MCF 10A (cell line): ENCODE measurements at regions of chr14 and their contacts with region 1.

Region 1: GRCh38 chr14:99729991-99730868 is 46.1 kb downstream of the CYP46A1 start:
- DNase-seq: peak; percentile 34
- H3K4me3 Mint-ChIP-seq: no peak overlapping the region
- H3K27ac Mint-ChIP-seq: no peak overlapping the region
- H3K4me1 Mint-ChIP-seq: no peaks in the 10 kb centered on the region
- H3K27me3 Mint-ChIP-seq: no peaks in the 10 kb centered on the region
- CTCF ChIP-seq: peak; percentile 90

Region 2: GRCh38 chr14:99192028-99192621 is 538.1 kb before region 1 on chr14:
- CTCF ChIA-PET with region 1: no interaction called
- POLR2A ChIA-PET with region 1: no interaction called
- intact Hi-C with region 1: no loop called
- DNase-seq: peak; percentile 85
- H3K4me3 Mint-ChIP-seq: peak overlapping the region; percentile 72
- H3K27ac Mint-ChIP-seq: peak overlapping the region; percentile 57
- H3K4me1 Mint-ChIP-seq: peaks cover 13% of the 10 kb centered on the region
- H3K27me3 Mint-ChIP-seq: no peaks in the 10 kb centered on the region
- CTCF ChIP-seq: no peak

Region 3: DNA sequence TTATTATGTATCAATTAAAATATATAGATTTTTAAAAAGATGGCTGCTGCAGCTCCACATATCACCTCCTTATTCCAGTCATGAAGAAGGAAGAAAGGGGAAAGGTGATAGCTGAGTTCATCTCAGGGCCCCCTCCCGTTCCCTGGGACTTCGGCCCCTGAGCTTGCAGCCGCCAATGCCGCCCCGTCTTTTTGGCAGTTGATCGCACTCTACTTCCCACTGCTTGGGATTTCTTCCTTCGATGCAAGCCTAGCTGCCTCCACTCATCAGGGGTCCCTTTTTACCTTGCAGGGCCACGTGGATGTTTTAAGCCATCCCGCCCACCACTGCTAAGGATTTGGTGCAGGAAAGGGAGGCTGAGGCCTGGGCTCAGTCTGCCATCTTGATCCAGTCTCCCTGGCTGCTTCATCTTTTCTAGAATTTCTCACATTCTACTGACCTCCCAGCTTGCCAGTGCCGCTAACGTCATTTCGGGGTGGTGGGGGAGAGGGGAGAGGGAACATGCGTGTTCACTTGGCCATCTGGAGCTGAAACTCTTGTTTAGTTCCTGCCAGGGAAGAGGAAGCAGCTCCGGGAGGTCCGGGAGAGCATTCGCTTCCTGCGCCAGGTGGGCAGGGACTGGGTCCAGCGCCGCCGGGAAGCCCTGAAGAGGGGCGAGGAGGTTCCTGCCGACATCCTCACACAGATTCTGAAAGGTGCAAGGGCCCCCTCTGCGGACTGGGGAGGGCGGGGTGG is 14.8 kb before region 1 on chr14:
- CTCF ChIA-PET with region 1: interaction called, 10 read pairs
- POLR2A ChIA-PET with region 1: no interaction called
- intact Hi-C with region 1: no loop called
- DNase-seq: no peak
- H3K4me3 Mint-ChIP-seq: no peak overlapping the region
- H3K27ac Mint-ChIP-seq: no peak overlapping the region
- H3K4me1 Mint-ChIP-seq: no peaks in the 10 kb centered on the region
- H3K27me3 Mint-ChIP-seq: no peaks in the 10 kb centered on the region
- CTCF ChIP-seq: no peak

Region 4: DNA sequence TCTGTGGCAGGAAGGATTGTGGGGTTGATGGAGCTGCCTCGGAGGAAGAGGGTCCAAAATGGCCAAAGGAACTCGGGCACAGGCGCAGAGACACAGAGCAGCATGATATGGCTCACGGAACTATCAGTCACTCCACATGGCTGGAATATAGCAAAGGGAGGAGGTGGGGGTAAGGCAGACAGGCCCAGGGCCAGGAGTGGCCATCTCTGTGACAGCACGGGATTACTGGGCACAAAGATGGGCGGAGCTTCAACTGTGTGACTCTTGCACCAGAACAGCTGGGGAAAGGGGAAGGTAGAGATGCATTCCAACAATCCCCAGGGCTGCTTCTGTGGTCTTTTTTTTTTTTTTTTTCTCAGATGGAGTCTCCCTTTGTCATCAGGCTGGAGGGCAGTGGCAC is 38.2 kb after region 1 on chr14:
- CTCF ChIA-PET with region 1: no interaction called
- POLR2A ChIA-PET with region 1: no interaction called
- intact Hi-C with region 1: no loop called
- DNase-seq: no peak
- H3K4me3 Mint-ChIP-seq: no peak overlapping the region
- H3K27ac Mint-ChIP-seq: no peak overlapping the region
- H3K4me1 Mint-ChIP-seq: peaks cover 17% of the 10 kb centered on the region
- H3K27me3 Mint-ChIP-seq: no peaks in the 10 kb centered on the region
- CTCF ChIP-seq: no peak